Ascending aorta (tissue), 2 donors: ENCODE measurements at regions of chr2 and their contacts with region 1.

Region 1: GRCh38 chr2:127526149-127527000 is at the start of gene IWS1:
- DNase-seq: peak; percentile 83 to 98
- H3K4me3 ChIP-seq: peak within 1 kb of the TSS; percentile 84 to 86
- H3K27ac ChIP-seq: peak within 1 kb of the TSS; percentile 84 to 95
- H3K4me1 ChIP-seq: peaks cover 0 to 10% of the 10 kb centered on the region in 2 donors
- H3K27me3 ChIP-seq: no peaks in the 10 kb centered on the region
- CTCF ChIP-seq: peak; percentile 21 to 54 (median 27)
- total RNA-seq, gene IWS1: 54.6 TPM

Region 2: GRCh38 chr2:126975671-126976655 is 550.4 kb before region 1 on chr2:
- intact Hi-C with region 1: no loop called
- DNase-seq: no peak
- H3K4me3 ChIP-seq: no peak overlapping the region
- H3K27ac ChIP-seq: no peak overlapping the region
- H3K4me1 ChIP-seq: peaks cover 3 to 4% of the 10 kb centered on the region in 2 donors
- H3K27me3 ChIP-seq: no peaks in the 10 kb centered on the region
- CTCF ChIP-seq: no peak

Region 3: DNA sequence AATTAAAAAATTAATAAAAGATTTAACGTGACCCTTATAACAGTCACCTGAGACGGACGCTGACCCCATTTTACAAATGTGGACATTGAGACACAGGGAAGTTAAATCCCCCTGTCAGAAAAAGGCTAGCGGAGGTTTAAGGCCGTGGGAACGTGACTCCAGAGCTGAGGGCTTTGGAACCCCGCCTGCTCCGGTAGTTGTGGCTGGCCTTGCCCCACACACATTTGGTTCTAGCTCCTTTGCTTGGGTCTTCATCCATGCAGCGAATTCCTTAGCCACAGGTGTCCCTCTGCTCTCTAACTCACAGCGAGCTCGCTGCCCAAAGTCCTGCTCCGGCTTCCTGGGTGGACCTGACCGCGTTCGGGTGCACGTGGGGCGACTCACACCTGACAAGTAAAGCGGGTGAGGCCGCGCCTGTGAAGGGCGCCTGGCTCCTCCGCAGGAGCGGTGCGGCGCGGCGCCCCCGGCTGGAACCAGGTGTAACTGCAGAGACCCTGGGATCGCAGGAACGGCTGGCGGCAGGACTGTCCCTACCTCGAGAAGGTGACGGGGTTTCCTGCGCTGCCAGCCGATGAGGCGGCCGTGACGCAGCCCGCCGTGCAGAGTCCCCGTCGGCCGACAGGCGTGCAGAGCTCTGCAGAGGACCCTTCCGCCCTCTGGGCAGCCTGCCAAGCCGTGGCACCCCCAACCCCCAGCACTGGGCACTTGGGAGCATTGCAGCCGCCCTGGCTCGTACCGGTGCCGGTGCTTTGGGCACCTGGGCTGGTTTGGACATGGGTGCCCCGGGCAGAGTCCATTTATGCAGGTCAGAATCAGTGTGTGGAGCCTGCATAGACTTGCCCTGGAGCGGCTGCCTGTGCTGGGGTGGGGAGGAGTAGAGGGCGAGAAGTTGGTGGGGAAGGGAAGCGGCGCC is 110.5 kb before region 1 on chr2:
- intact Hi-C with region 1: loop called (anchors 5 kb)
- DNase-seq: peak in 1 of 2 donors; percentile 79
- H3K4me3 ChIP-seq: peak overlapping the region; percentile 41 to 59
- H3K27ac ChIP-seq: no peak overlapping the region
- H3K4me1 ChIP-seq: peaks cover 8 to 37% of the 10 kb centered on the region in 2 donors
- H3K27me3 ChIP-seq: no peaks in the 10 kb centered on the region
- CTCF ChIP-seq: peak; percentile 62 to 79 (median 65)

Region 4: DNA sequence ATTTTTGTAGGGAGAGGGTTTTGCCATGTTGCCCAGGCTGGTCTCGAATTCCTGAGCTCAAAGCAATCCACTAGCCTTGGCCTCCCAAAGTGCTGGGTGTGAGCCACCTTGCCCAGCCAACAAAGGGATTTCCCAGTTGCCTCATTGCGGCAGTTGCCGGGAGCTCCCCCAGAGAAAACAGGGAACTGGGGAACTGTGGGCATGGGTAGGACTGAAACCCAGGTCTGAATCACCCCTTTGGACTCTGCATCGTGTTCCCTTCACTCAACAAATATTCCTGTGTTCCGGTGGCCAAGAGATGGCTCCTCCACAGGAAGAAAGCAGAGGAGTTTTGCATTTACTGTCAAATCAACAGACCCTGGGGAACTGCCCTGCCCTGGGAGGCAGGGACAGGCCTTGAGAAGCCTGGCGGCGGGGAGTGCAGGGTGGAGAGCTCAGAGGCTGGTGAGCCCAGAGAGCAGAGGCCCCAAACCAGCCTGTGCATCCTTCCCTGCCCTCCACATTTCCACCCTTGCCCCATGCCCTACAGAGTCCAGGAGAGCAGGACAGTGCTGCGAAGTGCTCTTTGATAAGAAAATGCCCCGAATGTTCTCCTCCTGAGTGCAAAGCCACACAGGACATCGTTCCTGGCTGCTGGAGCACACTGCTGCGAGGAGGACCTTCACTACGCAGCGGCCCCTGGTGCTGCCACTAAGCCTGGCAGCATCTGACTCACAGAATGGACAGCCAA is 34.0 kb after region 1 on chr2:
- intact Hi-C with region 1: loop called (anchors 1 kb)
- DNase-seq: peak in 1 of 2 donors; percentile 65
- H3K4me3 ChIP-seq: peak overlapping the region in 1 of 2 donors; percentile 4
- H3K27ac ChIP-seq: peak overlapping the region; percentile 41 to 57
- H3K4me1 ChIP-seq: peaks cover 0 to 15% of the 10 kb centered on the region in 2 donors
- H3K27me3 ChIP-seq: no peaks in the 10 kb centered on the region
- CTCF ChIP-seq: peak in 2 of 3 experiments; percentile 55 to 58

Region 5: GRCh38 chr2:127576433-127577207 is 50.2 kb after region 1 on chr2:
- intact Hi-C with region 1: loop called (anchors 1 kb)
- DNase-seq: peak in 1 of 2 donors; percentile 93
- H3K4me3 ChIP-seq: peak overlapping the region in 1 of 2 donors; percentile 11
- H3K27ac ChIP-seq: peak overlapping the region; percentile 27 to 49
- H3K4me1 ChIP-seq: peaks cover 6 to 14% of the 10 kb centered on the region in 2 donors
- H3K27me3 ChIP-seq: no peaks in the 10 kb centered on the region
- CTCF ChIP-seq: no peak

Region 6: GRCh38 chr2:127664065-127664894 is 137.9 kb after region 1 on chr2:
- intact Hi-C with region 1: no loop called
- DNase-seq: peak in 1 of 2 donors; percentile 63
- H3K4me3 ChIP-seq: peak overlapping the region; percentile 52 to 60
- H3K27ac ChIP-seq: peak overlapping the region; percentile 58 to 73
- H3K4me1 ChIP-seq: peaks cover 34 to 70% of the 10 kb centered on the region in 2 donors
- H3K27me3 ChIP-seq: no peaks in the 10 kb centered on the region
- CTCF ChIP-seq: no peak

Region 7: DNA sequence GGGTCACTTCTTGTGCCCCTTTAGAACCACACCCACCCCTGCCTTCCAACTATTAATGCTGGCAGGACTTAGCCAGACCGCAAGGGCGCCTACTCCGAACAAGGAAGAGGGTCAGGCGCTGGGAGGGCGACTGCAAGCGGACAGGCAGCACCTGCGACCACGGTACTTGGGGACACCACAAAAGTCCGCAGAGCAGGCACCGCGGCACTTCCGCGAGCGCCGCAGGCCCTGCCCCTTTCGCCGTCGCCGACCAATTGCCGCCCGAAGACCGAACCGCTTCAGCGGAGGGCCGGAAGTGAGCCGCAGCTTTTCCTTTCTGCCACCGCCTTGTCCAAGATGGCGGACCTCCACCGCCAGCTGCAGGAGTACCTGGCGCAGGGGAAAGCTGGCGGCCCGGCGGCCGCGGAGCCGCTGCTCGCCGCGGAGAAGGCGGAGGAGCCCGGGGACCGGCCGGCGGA is 174.8 kb after region 1 on chr2 and contains the start of gene SFT2D3:
- intact Hi-C with region 1: loop called (anchors 2 kb)
- DNase-seq: peak; percentile 52 to 95
- H3K4me3 ChIP-seq: peak within 1 kb of the TSS; percentile 81 to 86
- H3K27ac ChIP-seq: peak within 1 kb of the TSS; percentile 90 to 93
- H3K4me1 ChIP-seq: peaks cover 0 to 22% of the 10 kb centered on the region in 2 donors
- H3K27me3 ChIP-seq: no peaks in the 10 kb centered on the region
- CTCF ChIP-seq: no peak
- total RNA-seq, gene SFT2D3: 8.3 TPM